ENCODE measurements at regions of chr4 and their contacts with region 1.

Region 1: DNA sequence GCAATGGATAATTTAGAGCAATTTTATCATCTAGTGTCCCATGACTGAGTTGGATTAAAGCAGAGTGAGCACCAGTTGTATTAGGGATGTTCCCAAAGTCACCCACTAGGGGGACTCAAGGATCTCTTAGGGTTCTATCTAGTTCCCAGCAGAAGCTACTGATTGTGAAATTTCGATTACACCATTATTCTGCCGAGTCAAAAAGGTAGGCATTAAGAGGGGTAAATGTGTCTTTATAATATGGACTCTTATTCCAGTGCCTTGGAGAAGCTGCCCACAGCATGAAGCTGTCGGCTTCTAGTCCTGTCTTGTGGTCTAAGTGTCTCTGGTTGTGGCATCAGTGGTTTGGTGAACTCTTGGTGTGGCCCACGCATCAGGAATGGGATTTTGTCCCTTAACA is 53.3 kb downstream of the RGS12 start:
- DNase-seq: peak in 1 of 2 donors; percentile 74
- ATAC-seq: peak; percentile 84 to 93 (median 92)
- H3K4me3 ChIP-seq: no peak overlapping the region
- H3K27ac ChIP-seq: no peak overlapping the region
- H3K4me1 ChIP-seq: peaks cover 0 to 21% (median 4%) of the 10 kb centered on the region in 9 donors
- H3K27me3 ChIP-seq: no peaks in the 10 kb centered on the region
- CTCF ChIP-seq: peak; percentile 84 to 94 (median 91)

Region 2: GRCh38 chr4:3193531-3194203 is 152.5 kb before region 1 on chr4:
- intact Hi-C with region 1: loop called in 1 of 10 experiments (anchors 10 kb)
- DNase-seq: no peak
- ATAC-seq: no peak
- H3K4me3 ChIP-seq: no peak overlapping the region
- H3K27ac ChIP-seq: no peak overlapping the region
- H3K4me1 ChIP-seq: peaks cover 0 to 3% (median 0%) of the 10 kb centered on the region in 9 donors
- H3K27me3 ChIP-seq: no peaks in the 10 kb centered on the region
- CTCF ChIP-seq: peak in 7 of 9 donors; percentile 22 to 48 (median 42)

Region 3: GRCh38 chr4:3369781-3370674 is 23.9 kb after region 1 on chr4:
- intact Hi-C with region 1: loop called in 1 of 10 experiments (anchors 1 kb)
- DNase-seq: peak; percentile 68 to 71
- ATAC-seq: peak; percentile 52 to 78 (median 71)
- H3K4me3 ChIP-seq: peak overlapping the region in 9 of 10 donors; percentile 8 to 50 (median 46)
- H3K27ac ChIP-seq: peak overlapping the region in 7 of 10 donors; percentile 22 to 74 (median 43)
- H3K4me1 ChIP-seq: peaks cover 5 to 53% (median 41%) of the 10 kb centered on the region in 9 donors
- H3K27me3 ChIP-seq: no peaks in the 10 kb centered on the region
- CTCF ChIP-seq: no peak

Region 4: DNA sequence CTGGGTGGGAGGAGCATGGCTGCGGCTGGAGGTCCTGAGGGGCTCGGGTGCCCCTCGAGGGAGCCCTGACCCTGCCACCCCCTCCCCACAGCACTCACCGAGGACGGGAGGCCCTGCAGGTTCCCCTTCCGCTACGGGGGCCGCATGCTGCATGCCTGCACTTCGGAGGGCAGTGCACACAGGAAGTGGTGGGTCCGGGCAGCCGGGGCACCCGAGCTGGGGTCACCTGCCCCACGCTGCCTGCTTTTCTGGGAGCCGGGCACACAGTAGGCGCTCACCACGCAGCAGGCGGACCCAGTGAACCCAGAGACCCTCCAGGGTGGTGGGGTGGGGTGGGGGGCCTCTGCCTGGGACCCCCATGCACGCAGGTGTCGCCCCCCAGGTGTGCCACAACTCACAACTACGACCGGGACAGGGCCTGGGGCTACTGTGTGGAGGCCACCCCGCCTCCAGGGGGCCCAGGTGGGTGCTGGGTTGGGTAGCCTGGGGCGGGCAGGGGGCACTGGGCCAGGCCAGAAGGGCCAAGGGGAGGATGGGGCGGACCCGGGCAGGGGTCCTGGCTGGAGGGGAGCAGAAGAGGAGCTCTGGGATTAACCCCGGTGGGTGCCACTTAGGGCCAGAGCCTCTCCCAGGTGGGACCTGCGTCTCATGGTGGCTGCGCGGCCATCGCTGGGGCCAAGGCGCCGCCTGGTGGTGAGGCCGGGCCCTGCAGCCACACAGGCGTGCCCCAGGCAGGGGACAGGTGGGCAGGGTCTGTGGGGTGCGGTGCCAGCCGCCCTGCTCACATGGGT is 97.0 kb after region 1 on chr4:
- intact Hi-C with region 1: loop called (anchors 1 to 5 kb)
- DNase-seq: peak in 1 of 2 donors; percentile 54
- ATAC-seq: peak; percentile 51 to 73 (median 62)
- H3K4me3 ChIP-seq: no peak overlapping the region
- H3K27ac ChIP-seq: no peak overlapping the region
- H3K4me1 ChIP-seq: peaks cover 0 to 5% (median 0%) of the 10 kb centered on the region in 9 donors
- H3K27me3 ChIP-seq: no peaks in the 10 kb centered on the region
- CTCF ChIP-seq: peak; percentile 94 to 100 (median 99)

Measured in heart right ventricle (tissue), 16 donors.